ENCODE measurements at regions of chr4 and their contacts with region 1.

Region 1: DNA sequence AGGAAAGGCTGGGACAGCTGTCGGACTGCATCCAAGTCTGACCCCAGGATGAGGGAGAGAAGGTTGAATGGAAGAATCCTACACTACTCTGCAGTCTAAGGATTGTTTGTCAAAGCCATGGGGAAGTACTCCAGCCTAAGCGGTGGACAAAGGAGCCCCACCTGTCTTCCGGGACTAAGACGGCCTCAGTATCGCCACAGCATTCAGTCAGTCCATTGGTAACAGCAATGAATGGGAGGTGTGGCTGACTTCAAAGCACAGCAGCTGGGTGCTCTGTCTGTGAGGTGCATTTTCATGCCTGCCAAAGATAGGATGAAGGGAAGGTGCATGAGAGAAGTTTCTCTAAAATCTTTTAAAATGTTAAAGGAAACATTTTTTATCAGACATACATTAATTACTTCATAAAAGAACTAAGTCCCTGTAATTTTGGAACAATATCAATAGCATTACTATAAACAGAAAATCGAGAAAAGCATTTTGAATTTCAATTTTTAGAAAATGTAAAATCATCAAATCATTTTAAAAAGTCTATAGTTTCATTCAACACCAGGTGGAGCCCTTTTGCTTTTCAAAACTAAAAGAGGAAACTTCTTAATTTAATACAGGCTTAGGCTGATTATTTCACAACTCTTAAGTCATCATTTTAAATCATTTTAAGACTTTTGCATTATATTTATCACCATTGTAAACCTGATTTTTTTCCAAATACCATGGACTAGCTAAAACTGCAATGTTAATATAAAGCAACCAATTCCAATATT is 27.6 kb upstream of the INTU start:
- DNase-seq: no peak

Region 2: GRCh38 chr4:127533028-127533700 is 72.0 kb before region 1 on chr4:
- intact Hi-C with region 1: no loop called
- DNase-seq: no peak

Region 3: DNA sequence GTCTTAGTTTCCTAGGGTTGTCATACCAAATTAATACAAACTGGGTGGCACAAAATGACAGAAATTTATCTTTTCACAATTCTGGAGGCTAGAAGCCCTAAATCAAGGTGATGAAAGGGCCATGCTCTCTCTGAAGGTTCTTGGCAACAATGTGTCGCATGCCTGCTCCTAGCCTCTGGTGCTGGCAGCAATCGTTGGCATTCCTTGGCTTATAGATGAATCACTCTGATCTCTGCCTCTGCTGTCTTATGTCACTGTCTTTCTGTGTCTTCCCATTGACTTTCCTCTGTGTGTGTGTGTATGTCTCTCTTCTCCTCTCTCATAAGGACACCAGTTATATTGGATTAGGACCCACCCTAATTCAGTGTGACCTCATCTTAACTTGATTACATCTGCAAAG is 11.8 kb after region 1 on chr4:
- intact Hi-C with region 1: no loop called
- DNase-seq: no peak

Region 4: DNA sequence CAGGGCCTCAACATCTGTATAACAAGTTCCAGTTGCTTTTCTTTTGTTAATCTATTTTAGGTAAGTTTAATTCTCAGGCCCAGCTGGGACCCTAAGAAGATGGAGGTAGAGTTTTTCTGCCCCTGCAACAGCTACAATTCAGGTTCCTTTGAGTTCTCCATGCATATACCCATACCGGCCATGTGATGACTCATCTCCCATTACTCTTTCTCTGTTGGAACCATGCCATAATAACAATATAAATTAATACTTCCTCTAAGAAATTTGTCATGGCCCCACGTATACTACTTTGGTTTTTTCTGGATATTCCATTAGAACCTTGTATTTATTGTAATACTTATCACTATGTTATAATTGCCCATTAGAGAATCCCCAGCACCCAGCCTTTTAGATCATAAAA is 26.3 kb after region 1 on chr4:
- intact Hi-C with region 1: loop called in 1 of 2 experiments (anchors 2 kb)
- DNase-seq: no peak

Region 5: GRCh38 chr4:127641524-127641923 is 36.4 kb after region 1 on chr4:
- intact Hi-C with region 1: no loop called
- DNase-seq: no peak

Region 6: GRCh38 chr4:127656047-127656680 is 51.0 kb after region 1 on chr4:
- intact Hi-C with region 1: no loop called
- DNase-seq: no peak

Region 7: GRCh38 chr4:127732613-127733328 is 127.6 kb after region 1 on chr4:
- intact Hi-C with region 1: loop called (anchors 5 kb)
- DNase-seq: no peak

Measured in posterior vena cava (tissue), 2 donors.